ENCODE measurements at regions of chr7 and their contacts with region 1.

Region 1: GRCh38 chr7:130904031-130904757 is 170.2 kb upstream of the KLF14 start:
- DNase-seq: peak; percentile 95
- ATAC-seq: peak; percentile 35
- H3K4me3 ChIP-seq: peak overlapping the region; percentile 58; the same call in 1 of the 2 replicates
- H3K27ac ChIP-seq: peak overlapping the region; percentile 92
- H3K4me1 ChIP-seq: peaks cover 89% of the 10 kb centered on the region
- H3K27me3 ChIP-seq: no peaks in the 10 kb centered on the region
- CTCF ChIP-seq: no peak

Region 2: DNA sequence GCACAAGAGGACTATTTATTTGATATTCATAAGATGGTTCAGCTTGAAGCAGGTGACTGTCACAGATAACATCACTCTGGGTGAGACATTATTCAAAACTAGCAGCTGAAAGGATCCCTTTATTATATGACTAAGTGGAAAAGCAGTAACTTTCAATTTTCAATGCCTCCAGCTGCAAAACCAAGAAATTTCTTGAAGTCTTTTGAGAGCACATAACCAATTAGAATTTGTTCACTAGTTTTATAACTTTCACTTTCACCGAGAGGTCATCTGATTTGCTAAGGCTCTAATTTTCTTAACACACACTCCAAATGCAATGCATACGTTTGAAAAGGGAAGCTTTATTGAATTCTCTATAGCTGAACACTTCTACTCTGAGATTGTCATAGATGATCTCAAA is 81.6 kb before region 1 on chr7:
- CTCF ChIA-PET with region 1: no interaction called
- POLR2A ChIA-PET with region 1: no interaction called
- intact Hi-C with region 1: no loop called
- DNase-seq: no peak
- ATAC-seq: no peak
- H3K4me3 ChIP-seq: no peak overlapping the region
- H3K27ac ChIP-seq: no peak overlapping the region
- H3K4me1 ChIP-seq: no peaks in the 10 kb centered on the region
- H3K27me3 ChIP-seq: no peaks in the 10 kb centered on the region
- CTCF ChIP-seq: no peak

Region 3: GRCh38 chr7:130921391-130922180 is 17.4 kb after region 1 on chr7:
- CTCF ChIA-PET with region 1: no interaction called
- POLR2A ChIA-PET with region 1: interaction called, 18 read pairs
- intact Hi-C with region 1: no loop called
- DNase-seq: no peak
- ATAC-seq: no peak
- H3K4me3 ChIP-seq: no peak overlapping the region
- H3K27ac ChIP-seq: no peak overlapping the region
- H3K4me1 ChIP-seq: peaks cover 65% of the 10 kb centered on the region
- H3K27me3 ChIP-seq: no peaks in the 10 kb centered on the region
- CTCF ChIP-seq: no peak

Region 4: GRCh38 chr7:130929896-130930659 is 25.9 kb after region 1 on chr7:
- CTCF ChIA-PET with region 1: no interaction called
- POLR2A ChIA-PET with region 1: interaction called, 20 read pairs
- intact Hi-C with region 1: no loop called
- DNase-seq: peak; percentile 55
- ATAC-seq: peak; percentile 60
- H3K4me3 ChIP-seq: no peak overlapping the region
- H3K27ac ChIP-seq: peak overlapping the region; percentile 5; the same call in 1 of the 2 replicates
- H3K4me1 ChIP-seq: peaks cover 21% of the 10 kb centered on the region
- H3K27me3 ChIP-seq: no peaks in the 10 kb centered on the region
- CTCF ChIP-seq: no peak